ENCODE measurements at regions of chr19 and their contacts with region 1.

Region 1: DNA sequence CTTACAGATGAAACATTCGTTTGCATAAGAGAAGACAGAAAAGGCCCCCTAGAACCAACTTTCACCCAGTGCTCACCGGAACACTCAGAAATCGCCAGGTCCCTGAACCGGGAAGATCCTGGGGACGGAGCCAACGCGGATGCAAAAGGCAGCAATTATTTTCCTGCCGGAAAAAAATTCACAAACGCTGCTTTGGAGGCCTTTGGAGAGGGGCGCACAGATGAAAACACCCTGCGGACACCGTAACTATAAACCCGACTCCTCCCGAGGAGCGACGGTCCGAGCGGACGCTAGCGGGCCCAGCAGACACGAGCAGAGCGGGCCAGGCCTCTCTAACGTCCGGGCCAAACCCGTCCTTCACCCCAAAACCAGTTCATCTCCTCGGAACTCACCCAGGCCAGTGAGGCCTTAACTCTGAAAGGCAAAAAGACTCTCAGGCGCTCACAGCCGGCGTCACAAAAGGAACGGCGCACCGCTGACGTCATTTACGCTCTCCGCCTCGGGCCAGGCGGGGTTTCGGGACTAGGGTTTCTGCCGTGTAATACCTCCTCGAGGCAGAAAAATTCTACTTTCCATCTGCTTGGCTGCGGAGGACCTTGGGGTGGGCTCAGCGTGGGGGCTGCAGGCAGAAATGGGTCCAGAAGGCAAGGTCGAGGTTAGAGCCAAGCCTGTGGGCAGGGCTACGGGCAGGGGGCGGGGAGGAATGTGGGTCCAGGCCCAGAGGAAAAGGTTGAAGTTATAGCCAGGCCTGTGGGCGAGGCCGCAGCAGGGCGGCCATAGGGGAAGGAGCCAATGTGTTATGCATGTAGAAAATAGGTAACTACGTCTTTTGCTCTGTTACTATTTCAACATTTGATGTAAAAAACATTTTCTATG is at the start of gene ZNF426:
- DNase-seq: peak; percentile 72 to 90 (median 86)
- H3K4me3 ChIP-seq: peak within 1 kb of the TSS; percentile 57 to 97 (median 83)
- H3K27ac ChIP-seq: peak within 1 kb of the TSS; percentile 69 to 98 (median 91)
- H3K27me3 ChIP-seq: no peaks in the 10 kb centered on the region
- CTCF ChIP-seq: peak in 13 of 56 donors; percentile 5 to 25 (median 11)
- total RNA-seq, gene ZNF426: 12.8 to 23.7 (median 18.0) TPM

Region 2: GRCh38 chr19:9427941-9428340 is 110.5 kb before region 1 on chr19:
- intact Hi-C with region 1: no loop called
- DNase-seq: no peak
- H3K4me3 ChIP-seq: no peak overlapping the region
- H3K27ac ChIP-seq: no peak overlapping the region
- H3K27me3 ChIP-seq: no peaks in the 10 kb centered on the region
- CTCF ChIP-seq: no peak

Region 3: DNA sequence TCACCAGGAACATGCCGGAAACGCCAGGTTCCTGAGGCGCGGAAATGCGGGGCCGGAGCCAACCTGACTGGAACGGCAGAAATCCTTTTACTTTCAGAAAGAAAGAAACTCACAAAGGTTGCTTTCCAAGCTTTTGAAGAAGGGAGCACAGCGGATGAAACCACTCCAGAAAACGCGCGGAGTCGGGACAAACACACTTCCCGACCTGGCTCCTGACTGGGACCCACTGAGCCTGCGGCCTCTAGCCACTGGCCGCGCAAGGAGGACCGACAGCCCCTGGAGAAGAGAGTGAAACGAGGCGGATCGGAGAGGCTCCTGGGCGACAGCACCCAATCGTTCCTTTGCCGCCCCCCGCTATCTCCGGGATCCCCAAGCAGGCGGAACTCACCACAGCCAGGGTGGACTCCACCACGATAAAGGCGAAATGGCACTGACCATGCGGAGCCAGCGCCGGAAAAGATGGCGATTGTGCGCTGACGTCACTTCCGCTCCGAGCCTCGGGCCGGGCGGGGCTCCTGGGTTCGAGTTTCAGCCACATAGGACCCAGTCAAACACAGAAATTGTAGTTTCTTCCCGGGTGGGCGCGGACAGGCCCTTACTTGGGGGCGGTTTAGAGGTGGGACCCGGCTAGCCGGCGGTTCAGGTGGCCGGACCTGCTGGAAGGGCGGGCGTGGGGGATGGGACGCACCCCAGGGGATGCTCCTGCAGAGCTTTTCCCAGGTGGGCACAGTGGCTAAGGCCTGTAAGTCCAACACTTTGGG is 45.8 kb after region 1 on chr19 and contains the start of gene ZNF121:
- intact Hi-C with region 1: loop called in 1 of 2 experiments (anchors 5 kb)
- DNase-seq: peak; percentile 76 to 94 (median 86)
- H3K4me3 ChIP-seq: peak within 1 kb of the TSS; percentile 58 to 99 (median 88)
- H3K27ac ChIP-seq: peak within 1 kb of the TSS; percentile 51 to 98 (median 93)
- H3K27me3 ChIP-seq: peaks cover 0 to 10% (median 0%) of the 10 kb centered on the region in 45 donors
- CTCF ChIP-seq: peak in 30 of 56 donors; percentile 11 to 56 (median 27)
- total RNA-seq, gene ZNF121: 16.5 to 34.9 (median 23.7) TPM